GM12878 (cell line): ENCODE measurements at regions of chr4 and their contacts with region 1.

Region 1: GRCh38 chr4:73258686-73259570 is at the start of gene ANKRD17:
- DNase-seq: peak; percentile 79
- ATAC-seq: peak; percentile 87
- H3K4me3 ChIP-seq: peak within 1 kb of the TSS; percentile 87
- H3K27ac ChIP-seq: peak within 1 kb of the TSS; percentile 95
- H3K4me1 ChIP-seq: no peaks in the 10 kb centered on the region
- H3K27me3 ChIP-seq: no peaks in the 10 kb centered on the region
- CTCF ChIP-seq: no peak
- EP300 ChIP-seq: no peak
- POLR2A ChIP-seq: peak; percentile 87
- RAD21 ChIP-seq: no peak
- polyA plus RNA-seq, gene ANKRD17: 11.7 to 18.5 TPM

Region 2: GRCh38 chr4:72670521-72670920 is 588.4 kb before region 1 on chr4:
- CTCF ChIA-PET with region 1: no interaction called
- POLR2A ChIA-PET with region 1: no interaction called
- RAD21 ChIA-PET with region 1: no interaction called
- SMC1A ChIA-PET with region 1: no interaction called
- in situ Hi-C with region 1: no loop called
- intact Hi-C with region 1: no loop called
- DNase-seq: no peak
- ATAC-seq: no peak
- H3K4me3 ChIP-seq: no peak overlapping the region
- H3K27ac ChIP-seq: no peak overlapping the region
- H3K4me1 ChIP-seq: no peaks in the 10 kb centered on the region
- H3K27me3 ChIP-seq: no peaks in the 10 kb centered on the region
- CTCF ChIP-seq: no peak
- EP300 ChIP-seq: no peak
- POLR2A ChIP-seq: no peak
- RAD21 ChIP-seq: no peak

Region 3: GRCh38 chr4:73069338-73070073 is 189.4 kb before region 1 on chr4 and contains the start of gene COX18:
- CTCF ChIA-PET with region 1: interaction called, 10 read pairs
- POLR2A ChIA-PET with region 1: interaction called, 27 read pairs
- RAD21 ChIA-PET with region 1: interaction called, 15 read pairs
- SMC1A ChIA-PET with region 1: interaction called, 16 read pairs
- in situ Hi-C with region 1: no loop called
- intact Hi-C with region 1: loop called (anchors 1 kb)
- DNase-seq: peak; percentile 97
- ATAC-seq: peak; percentile 88
- H3K4me3 ChIP-seq: peak within 1 kb of the TSS; percentile 75
- H3K27ac ChIP-seq: peak within 1 kb of the TSS; percentile 97
- H3K4me1 ChIP-seq: peaks cover 4% of the 10 kb centered on the region; the same call in 1 of the 2 replicates
- H3K27me3 ChIP-seq: no peaks in the 10 kb centered on the region
- CTCF ChIP-seq: no peak
- EP300 ChIP-seq: peak in 1 of 2 experiments; percentile 41; a peak in 1 of 4 replicates
- POLR2A ChIP-seq: peak; percentile 91
- RAD21 ChIP-seq: no peak
- polyA plus RNA-seq, gene COX18: 7.2 to 10.2 TPM

Region 4: GRCh38 chr4:73109493-73109892 is 149.4 kb before region 1 on chr4:
- CTCF ChIA-PET with region 1: interaction called, 10 read pairs
- POLR2A ChIA-PET with region 1: no interaction called
- RAD21 ChIA-PET with region 1: no interaction called
- SMC1A ChIA-PET with region 1: interaction called, 3 read pairs
- in situ Hi-C with region 1: no loop called
- intact Hi-C with region 1: no loop called
- DNase-seq: no peak
- ATAC-seq: no peak
- H3K4me3 ChIP-seq: no peak overlapping the region
- H3K27ac ChIP-seq: no peak overlapping the region
- H3K4me1 ChIP-seq: no peaks in the 10 kb centered on the region
- H3K27me3 ChIP-seq: no peaks in the 10 kb centered on the region
- CTCF ChIP-seq: no peak
- EP300 ChIP-seq: no peak
- POLR2A ChIP-seq: no peak
- RAD21 ChIP-seq: no peak

Region 5: DNA sequence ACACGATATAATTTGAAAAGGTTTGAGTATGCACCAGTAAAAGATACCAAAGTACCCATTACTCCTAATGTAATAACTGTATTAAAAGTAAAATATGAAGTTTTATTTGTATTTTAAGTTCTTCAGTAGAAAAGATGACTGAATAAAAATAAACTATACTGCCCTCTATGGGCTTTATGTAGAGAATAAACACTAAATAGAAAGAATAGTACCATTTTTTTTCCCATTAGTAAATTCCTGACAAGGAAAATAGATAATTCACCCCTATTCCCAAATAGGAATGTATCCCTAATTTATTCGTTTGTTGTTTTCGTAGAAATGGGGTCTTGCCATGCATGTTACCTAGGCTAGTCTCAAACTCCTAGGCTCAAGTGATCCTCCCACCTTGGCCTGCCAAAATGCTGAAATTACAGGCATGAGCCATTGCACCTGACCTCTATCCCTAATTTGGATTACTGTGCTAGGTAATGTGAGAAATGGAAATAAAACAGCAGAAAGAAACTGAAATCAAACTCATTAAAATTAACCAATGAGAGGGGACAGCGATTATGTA is 115.9 kb before region 1 on chr4:
- CTCF ChIA-PET with region 1: interaction called, 15 read pairs
- POLR2A ChIA-PET with region 1: no interaction called
- RAD21 ChIA-PET with region 1: interaction called, 5 read pairs
- SMC1A ChIA-PET with region 1: interaction called, 5 read pairs
- in situ Hi-C with region 1: no loop called
- intact Hi-C with region 1: loop called (anchors 5 kb)
- DNase-seq: no peak
- ATAC-seq: no peak
- H3K4me3 ChIP-seq: no peak overlapping the region
- H3K27ac ChIP-seq: no peak overlapping the region
- H3K4me1 ChIP-seq: no peaks in the 10 kb centered on the region
- H3K27me3 ChIP-seq: no peaks in the 10 kb centered on the region
- CTCF ChIP-seq: peak in 1 of 3 experiments; percentile 13; a peak in 2 of 6 replicates
- EP300 ChIP-seq: no peak
- POLR2A ChIP-seq: no peak
- RAD21 ChIP-seq: no peak

Region 6: DNA sequence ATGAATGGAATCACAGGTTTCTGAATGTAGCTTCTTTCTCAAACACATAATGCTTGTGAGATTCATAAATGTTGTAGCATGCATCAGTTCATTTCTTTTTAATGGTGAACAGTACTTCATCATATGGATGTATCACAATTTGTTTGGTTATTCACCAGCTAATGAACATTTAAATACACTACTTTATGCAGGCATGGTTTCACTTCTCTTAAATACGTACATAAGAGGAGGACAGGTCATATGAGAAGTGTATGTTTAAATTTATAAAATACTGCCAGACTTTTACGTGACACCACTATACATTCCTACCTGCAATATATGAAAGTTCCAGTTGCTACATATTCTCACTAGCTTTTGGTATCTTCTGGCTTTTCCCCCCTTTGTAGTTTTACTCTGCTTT is 65.8 kb before region 1 on chr4:
- CTCF ChIA-PET with region 1: interaction called, 8 read pairs
- POLR2A ChIA-PET with region 1: interaction called, 6 read pairs
- RAD21 ChIA-PET with region 1: no interaction called
- SMC1A ChIA-PET with region 1: interaction called, 12 read pairs
- in situ Hi-C with region 1: no loop called
- intact Hi-C with region 1: no loop called
- DNase-seq: no peak
- ATAC-seq: peak; percentile 90
- H3K4me3 ChIP-seq: peak overlapping the region; percentile 26; the same call in 1 of the 2 replicates
- H3K27ac ChIP-seq: peak overlapping the region; percentile 27; the same call in 1 of the 2 replicates
- H3K4me1 ChIP-seq: peaks cover 3% of the 10 kb centered on the region; the same call in 1 of the 2 replicates
- H3K27me3 ChIP-seq: no peaks in the 10 kb centered on the region
- CTCF ChIP-seq: no peak
- EP300 ChIP-seq: no peak
- POLR2A ChIP-seq: no peak
- RAD21 ChIP-seq: no peak

Region 7: GRCh38 chr4:73245955-73246354 is 13.0 kb before region 1 on chr4:
- CTCF ChIA-PET with region 1: interaction called, 41 read pairs
- POLR2A ChIA-PET with region 1: interaction called, 4 read pairs
- RAD21 ChIA-PET with region 1: interaction called, 4 read pairs
- SMC1A ChIA-PET with region 1: interaction called, 15 read pairs
- in situ Hi-C with region 1: no loop called
- intact Hi-C with region 1: no loop called
- DNase-seq: no peak
- ATAC-seq: peak; percentile 25
- H3K4me3 ChIP-seq: no peak overlapping the region
- H3K27ac ChIP-seq: no peak overlapping the region
- H3K4me1 ChIP-seq: no peaks in the 10 kb centered on the region
- H3K27me3 ChIP-seq: no peaks in the 10 kb centered on the region
- CTCF ChIP-seq: no peak
- EP300 ChIP-seq: no peak
- POLR2A ChIP-seq: no peak
- RAD21 ChIP-seq: no peak

Region 8: DNA sequence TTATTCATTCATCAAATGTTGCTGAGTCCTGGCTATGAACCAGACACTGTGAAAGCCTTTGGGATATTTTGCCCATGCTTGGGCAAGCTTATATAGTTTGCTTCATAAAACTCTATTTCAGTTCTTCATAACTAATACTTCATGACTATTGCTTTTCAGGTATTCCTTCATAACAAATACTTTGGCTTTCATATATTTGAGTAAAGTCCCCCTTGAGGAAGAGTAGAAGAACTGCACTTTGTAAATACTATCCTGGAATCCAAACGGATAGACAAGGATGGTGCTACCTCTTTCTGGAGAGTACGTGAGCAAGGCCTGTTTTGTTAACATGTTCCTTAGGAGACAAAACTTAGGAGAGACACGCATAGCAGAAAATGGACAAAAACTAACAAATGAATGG is 175.4 kb after region 1 on chr4:
- CTCF ChIA-PET with region 1: no interaction called
- POLR2A ChIA-PET with region 1: no interaction called
- RAD21 ChIA-PET with region 1: no interaction called
- SMC1A ChIA-PET with region 1: no interaction called
- in situ Hi-C with region 1: no loop called
- intact Hi-C with region 1: no loop called
- DNase-seq: no peak
- ATAC-seq: peak; percentile 66
- H3K4me3 ChIP-seq: no peak overlapping the region
- H3K27ac ChIP-seq: no peak overlapping the region
- H3K4me1 ChIP-seq: no peaks in the 10 kb centered on the region
- H3K27me3 ChIP-seq: no peaks in the 10 kb centered on the region
- CTCF ChIP-seq: peak; percentile 38 to 55 (median 54); a peak in 5 of 6 replicates
- EP300 ChIP-seq: no peak
- POLR2A ChIP-seq: no peak
- RAD21 ChIP-seq: peak; percentile 27; the same call in 1 of the 2 replicates

Region 9: GRCh38 chr4:73593631-73594241 is 334.8 kb after region 1 on chr4:
- CTCF ChIA-PET with region 1: no interaction called
- POLR2A ChIA-PET with region 1: no interaction called
- RAD21 ChIA-PET with region 1: no interaction called
- SMC1A ChIA-PET with region 1: no interaction called
- in situ Hi-C with region 1: no loop called
- intact Hi-C with region 1: loop called (anchors 10 kb)
- DNase-seq: no peak
- ATAC-seq: no peak
- H3K4me3 ChIP-seq: no peak overlapping the region
- H3K27ac ChIP-seq: no peak overlapping the region
- H3K4me1 ChIP-seq: peaks cover 23% of the 10 kb centered on the region
- H3K27me3 ChIP-seq: no peaks in the 10 kb centered on the region
- CTCF ChIP-seq: peak; percentile 43 to 49 (median 48); a peak in 5 of 6 replicates
- EP300 ChIP-seq: no peak
- POLR2A ChIP-seq: no peak
- RAD21 ChIP-seq: peak; percentile 59